GM12878 (cell line): ENCODE measurements at regions of chr1 and their contacts with region 1.

Region 1: GRCh38 chr1:214584805-214585766 is 17.9 kb upstream of the CENPF start:
- DNase-seq: no peak
- ATAC-seq: peak; percentile 90
- H3K4me3 ChIP-seq: no peak overlapping the region
- H3K27ac ChIP-seq: no peak overlapping the region
- H3K4me1 ChIP-seq: no peaks in the 10 kb centered on the region
- H3K27me3 ChIP-seq: no peaks in the 10 kb centered on the region
- CTCF ChIP-seq: peak; percentile 40 to 72 (median 69); a peak in 5 of 6 replicates
- EP300 ChIP-seq: no peak
- POLR2A ChIP-seq: no peak
- RAD21 ChIP-seq: peak; percentile 73

Region 2: GRCh38 chr1:214102907-214103306 is 482.2 kb before region 1 on chr1:
- CTCF ChIA-PET with region 1: no interaction called
- POLR2A ChIA-PET with region 1: no interaction called
- RAD21 ChIA-PET with region 1: no interaction called
- SMC1A ChIA-PET with region 1: no interaction called
- in situ Hi-C with region 1: no loop called
- intact Hi-C with region 1: no loop called
- DNase-seq: no peak
- ATAC-seq: no peak
- H3K4me3 ChIP-seq: no peak overlapping the region
- H3K27ac ChIP-seq: no peak overlapping the region
- H3K4me1 ChIP-seq: no peaks in the 10 kb centered on the region
- H3K27me3 ChIP-seq: no peaks in the 10 kb centered on the region
- CTCF ChIP-seq: no peak
- EP300 ChIP-seq: no peak
- POLR2A ChIP-seq: no peak
- RAD21 ChIP-seq: no peak

Region 3: GRCh38 chr1:214386747-214387146 is 198.3 kb before region 1 on chr1:
- CTCF ChIA-PET with region 1: interaction called, 68 read pairs
- POLR2A ChIA-PET with region 1: no interaction called
- RAD21 ChIA-PET with region 1: interaction called, 50 read pairs
- SMC1A ChIA-PET with region 1: interaction called, 66 read pairs
- in situ Hi-C with region 1: no loop called
- intact Hi-C with region 1: loop called (anchors 1 kb)
- DNase-seq: no peak
- ATAC-seq: peak; percentile 42; the same call in 2 of the 3 replicates
- H3K4me3 ChIP-seq: no peak overlapping the region
- H3K27ac ChIP-seq: no peak overlapping the region
- H3K4me1 ChIP-seq: no peaks in the 10 kb centered on the region
- H3K27me3 ChIP-seq: peaks cover 0 to 2% of the 10 kb centered on the region in 2 experiments; a peak in 1 of 4 replicates
- CTCF ChIP-seq: no peak
- EP300 ChIP-seq: no peak
- POLR2A ChIP-seq: no peak
- RAD21 ChIP-seq: no peak

Region 4: DNA sequence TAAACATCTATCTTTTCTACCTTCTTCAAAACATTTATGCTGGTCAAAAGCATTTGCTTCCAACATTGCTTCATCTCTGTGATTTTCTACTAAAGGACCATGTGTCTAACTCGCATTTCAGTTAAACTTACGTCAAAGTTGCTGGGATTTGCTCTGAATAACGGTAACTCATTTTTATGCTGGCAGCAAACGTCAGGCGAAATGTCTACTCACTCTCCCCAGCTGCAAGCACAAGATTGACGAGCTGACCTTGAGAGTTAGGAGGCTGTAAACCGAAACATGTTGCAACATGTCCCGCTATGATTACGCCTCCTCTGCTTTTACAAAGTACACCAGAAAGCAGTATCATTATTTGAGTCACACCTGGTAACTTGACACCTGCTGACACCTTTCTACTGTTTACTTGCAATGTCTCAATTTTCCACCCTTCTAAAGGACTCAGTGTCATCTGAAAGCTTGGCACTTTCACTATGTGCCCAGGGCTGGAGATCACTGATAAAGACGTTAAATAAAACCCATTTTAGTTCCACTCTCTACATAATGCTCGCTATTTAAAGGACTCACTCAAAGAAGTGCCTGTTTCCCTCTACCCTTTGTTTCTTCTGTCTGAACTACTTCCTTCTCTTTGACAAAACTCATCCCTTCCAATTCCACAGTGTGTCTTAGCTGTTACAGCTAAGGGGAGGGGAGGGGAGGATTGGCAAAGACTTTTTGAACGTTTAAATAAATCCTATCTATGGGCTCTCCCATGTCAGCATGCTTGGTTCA is 145.6 kb before region 1 on chr1:
- CTCF ChIA-PET with region 1: interaction called, 3 read pairs
- POLR2A ChIA-PET with region 1: no interaction called
- RAD21 ChIA-PET with region 1: interaction called, 21 read pairs
- SMC1A ChIA-PET with region 1: interaction called, 11 read pairs
- in situ Hi-C with region 1: no loop called
- intact Hi-C with region 1: no loop called
- DNase-seq: peak; percentile 60
- ATAC-seq: peak; percentile 85
- H3K4me3 ChIP-seq: peak overlapping the region; percentile 0; the same call in 1 of the 2 replicates
- H3K27ac ChIP-seq: peak overlapping the region; percentile 43
- H3K4me1 ChIP-seq: peaks cover 12% of the 10 kb centered on the region
- H3K27me3 ChIP-seq: no peaks in the 10 kb centered on the region
- CTCF ChIP-seq: no peak
- EP300 ChIP-seq: peak; percentile 77 to 83; a peak in 3 of 4 replicates
- POLR2A ChIP-seq: 0 out of 2 replicates have a peak, but pooled peaks have one; percentile 47
- RAD21 ChIP-seq: no peak

Region 5: DNA sequence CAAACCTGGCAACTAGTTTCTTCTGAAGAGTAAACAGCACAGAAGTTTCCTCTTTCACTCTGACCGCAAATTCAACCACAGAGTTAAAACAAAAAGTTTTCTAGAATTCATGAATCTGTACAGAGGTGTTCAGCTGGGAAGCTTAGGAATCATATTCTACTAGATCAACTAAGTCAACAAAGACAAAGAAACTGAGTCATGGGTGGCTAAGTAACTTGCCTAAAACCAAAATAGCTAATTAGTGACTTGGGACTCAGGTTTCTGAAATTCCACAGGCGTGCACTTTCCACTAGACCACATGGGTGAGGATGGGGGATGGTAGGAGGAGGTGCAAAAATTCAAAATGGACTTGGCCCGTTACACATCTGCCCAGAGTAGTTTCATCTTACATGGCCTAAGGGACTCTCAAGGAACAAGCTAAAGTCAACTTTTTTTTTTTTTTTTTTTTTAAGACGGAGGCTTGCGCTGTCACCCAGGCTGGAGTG is 59.5 kb before region 1 on chr1:
- CTCF ChIA-PET with region 1: interaction called, 5 read pairs
- POLR2A ChIA-PET with region 1: no interaction called
- RAD21 ChIA-PET with region 1: interaction called, 3 read pairs
- SMC1A ChIA-PET with region 1: interaction called, 11 read pairs
- in situ Hi-C with region 1: no loop called
- intact Hi-C with region 1: no loop called
- DNase-seq: no peak
- ATAC-seq: peak; percentile 81
- H3K4me3 ChIP-seq: no peak overlapping the region
- H3K27ac ChIP-seq: no peak overlapping the region
- H3K4me1 ChIP-seq: peaks cover 5% of the 10 kb centered on the region; the same call in 1 of the 2 replicates
- H3K27me3 ChIP-seq: no peaks in the 10 kb centered on the region
- CTCF ChIP-seq: no peak
- EP300 ChIP-seq: no peak
- POLR2A ChIP-seq: no peak
- RAD21 ChIP-seq: no peak

Region 6: GRCh38 chr1:214566158-214567104 is 18.7 kb before region 1 on chr1:
- CTCF ChIA-PET with region 1: interaction called, 17 read pairs
- POLR2A ChIA-PET with region 1: interaction called, 4 read pairs
- RAD21 ChIA-PET with region 1: interaction called, 33 read pairs
- SMC1A ChIA-PET with region 1: interaction called, 61 read pairs
- in situ Hi-C with region 1: no loop called
- intact Hi-C with region 1: no loop called
- DNase-seq: no peak
- ATAC-seq: peak; percentile 67
- H3K4me3 ChIP-seq: no peak overlapping the region
- H3K27ac ChIP-seq: no peak overlapping the region
- H3K4me1 ChIP-seq: no peaks in the 10 kb centered on the region
- H3K27me3 ChIP-seq: no peaks in the 10 kb centered on the region
- CTCF ChIP-seq: no peak
- EP300 ChIP-seq: no peak
- POLR2A ChIP-seq: no peak
- RAD21 ChIP-seq: no peak

Region 7: GRCh38 chr1:214670098-214670497 is 85.0 kb after region 1 on chr1:
- CTCF ChIA-PET with region 1: no interaction called
- POLR2A ChIA-PET with region 1: no interaction called
- RAD21 ChIA-PET with region 1: no interaction called
- SMC1A ChIA-PET with region 1: no interaction called
- in situ Hi-C with region 1: no loop called
- intact Hi-C with region 1: no loop called
- DNase-seq: no peak
- ATAC-seq: no peak
- H3K4me3 ChIP-seq: no peak overlapping the region
- H3K27ac ChIP-seq: no peak overlapping the region
- H3K4me1 ChIP-seq: no peaks in the 10 kb centered on the region
- H3K27me3 ChIP-seq: no peaks in the 10 kb centered on the region
- CTCF ChIP-seq: no peak
- EP300 ChIP-seq: no peak
- POLR2A ChIP-seq: no peak
- RAD21 ChIP-seq: no peak

Region 8: DNA sequence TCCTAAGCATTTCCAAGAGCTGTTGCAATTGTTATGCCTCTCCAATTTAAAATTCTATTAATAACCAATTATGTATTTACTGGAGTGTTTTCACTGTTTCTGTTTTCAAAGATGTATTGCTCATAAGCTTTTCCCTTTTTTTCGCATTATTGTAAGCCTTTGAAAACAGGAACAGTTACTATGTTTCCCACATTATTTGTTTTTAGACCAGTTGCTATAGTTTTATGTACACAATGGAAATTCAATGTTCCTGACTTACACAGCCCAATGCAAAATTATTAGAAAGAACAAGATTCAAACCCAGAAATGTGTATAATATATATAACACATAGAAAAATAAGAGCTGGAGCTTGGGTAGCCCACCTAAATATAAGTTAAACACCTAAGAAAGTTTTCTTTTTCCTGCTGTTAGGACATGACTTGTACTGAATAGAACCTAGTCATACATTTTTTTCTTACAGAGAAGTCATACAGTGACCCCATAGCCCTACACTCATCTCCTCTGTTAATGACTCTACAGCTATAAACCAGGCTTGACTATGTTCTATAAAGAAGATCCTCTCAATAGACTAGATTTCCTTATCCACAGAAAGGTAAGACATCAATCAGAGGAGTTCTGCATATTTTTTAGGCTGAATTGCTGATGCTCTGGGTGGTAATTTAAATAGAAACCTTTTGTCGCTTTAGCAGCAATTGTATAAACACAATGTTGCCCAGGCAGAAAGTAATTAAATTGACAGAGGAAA is 1538.5 kb after region 1 on chr1:
- CTCF ChIA-PET with region 1: no interaction called
- POLR2A ChIA-PET with region 1: no interaction called
- RAD21 ChIA-PET with region 1: no interaction called
- SMC1A ChIA-PET with region 1: no interaction called
- in situ Hi-C with region 1: no loop called
- intact Hi-C with region 1: no loop called
- DNase-seq: no peak
- ATAC-seq: no peak
- H3K4me3 ChIP-seq: no peak overlapping the region
- H3K27ac ChIP-seq: no peak overlapping the region
- H3K4me1 ChIP-seq: no peaks in the 10 kb centered on the region
- H3K27me3 ChIP-seq: no peaks in the 10 kb centered on the region
- CTCF ChIP-seq: no peak
- EP300 ChIP-seq: no peak
- POLR2A ChIP-seq: no peak
- RAD21 ChIP-seq: no peak